A549 (cell line): ENCODE measurements at regions of chr3 and their contacts with region 1.

Region 1: GRCh38 chr3:47824541-47825473 is 21.9 kb downstream of the DHX30 start:
- DNase-seq: peak; percentile 81 to 89
- ATAC-seq: peak; percentile 100
- H3K4me3 ChIP-seq: peak overlapping the region; percentile 78
- H3K27ac ChIP-seq: peak overlapping the region; percentile 87 to 92
- H3K4me1 ChIP-seq: peaks cover 12% of the 10 kb centered on the region; the same call in 2 of the 3 replicates
- CTCF ChIP-seq: peak; percentile 75
- EP300 ChIP-seq: no peak
- POLR2A ChIP-seq: peak; percentile 54
- RAD21 ChIP-seq: no peak; a peak in 1 of 5 replicates

Region 2: DNA sequence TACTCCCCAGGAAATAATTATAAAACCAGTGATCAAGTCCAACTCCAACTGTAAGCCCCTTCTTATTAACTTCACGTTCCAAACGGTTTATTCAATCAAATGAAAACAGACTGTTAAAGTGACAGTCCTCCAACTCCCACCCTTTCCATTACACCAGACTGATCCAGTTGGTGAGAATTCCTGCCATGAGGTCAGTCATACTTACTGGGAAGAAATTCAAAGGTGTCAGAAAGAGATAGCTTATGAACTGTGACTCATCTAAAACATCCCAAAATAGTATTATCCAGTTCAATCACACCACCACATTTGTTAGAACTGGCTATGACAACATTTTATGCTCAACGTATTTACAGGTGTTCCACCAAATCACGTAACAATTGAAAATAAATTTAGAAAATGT is 62.6 kb before region 1 on chr3:
- CTCF ChIA-PET with region 1: no interaction called
- POLR2A ChIA-PET with region 1: no interaction called
- DNase-seq: no peak
- ATAC-seq: no peak
- H3K4me3 ChIP-seq: no peak overlapping the region
- H3K27ac ChIP-seq: no peak overlapping the region
- H3K4me1 ChIP-seq: no peaks in the 10 kb centered on the region
- CTCF ChIP-seq: no peak
- EP300 ChIP-seq: no peak
- POLR2A ChIP-seq: no peak
- RAD21 ChIP-seq: no peak

Region 3: GRCh38 chr3:47813551-47814177 is 11.1 kb before region 1 on chr3:
- CTCF ChIA-PET with region 1: interaction called, 33 read pairs
- POLR2A ChIA-PET with region 1: interaction called, 6 read pairs
- DNase-seq: no peak
- ATAC-seq: no peak
- H3K4me3 ChIP-seq: no peak overlapping the region
- H3K27ac ChIP-seq: no peak overlapping the region
- H3K4me1 ChIP-seq: no peaks in the 10 kb centered on the region
- CTCF ChIP-seq: no peak
- EP300 ChIP-seq: no peak
- POLR2A ChIP-seq: no peak
- RAD21 ChIP-seq: no peak

Region 4: GRCh38 chr3:47836986-47837385 is 12.2 kb after region 1 on chr3:
- CTCF ChIA-PET with region 1: interaction called, 48 read pairs
- POLR2A ChIA-PET with region 1: interaction called, 6 read pairs
- DNase-seq: no peak
- ATAC-seq: peak in 1 of 2 experiments; percentile 26; a peak in 3 of 6 replicates
- H3K4me3 ChIP-seq: no peak overlapping the region
- H3K27ac ChIP-seq: no peak overlapping the region
- H3K4me1 ChIP-seq: no peaks in the 10 kb centered on the region
- CTCF ChIP-seq: no peak
- EP300 ChIP-seq: no peak
- POLR2A ChIP-seq: no peak
- RAD21 ChIP-seq: no peak

Region 5: GRCh38 chr3:47932421-47932820 is 107.6 kb after region 1 on chr3:
- CTCF ChIA-PET with region 1: no interaction called
- POLR2A ChIA-PET with region 1: no interaction called
- DNase-seq: no peak
- ATAC-seq: no peak
- H3K4me3 ChIP-seq: no peak overlapping the region
- H3K27ac ChIP-seq: no peak overlapping the region
- H3K4me1 ChIP-seq: no peaks in the 10 kb centered on the region
- CTCF ChIP-seq: no peak
- EP300 ChIP-seq: no peak
- POLR2A ChIP-seq: no peak
- RAD21 ChIP-seq: no peak

Region 6: GRCh38 chr3:48180021-48180420 is 355.2 kb after region 1 on chr3:
- CTCF ChIA-PET with region 1: no interaction called
- POLR2A ChIA-PET with region 1: interaction called, 10 read pairs
- DNase-seq: no peak
- ATAC-seq: no peak
- H3K4me3 ChIP-seq: no peak overlapping the region
- H3K27ac ChIP-seq: no peak overlapping the region
- H3K4me1 ChIP-seq: no peaks in the 10 kb centered on the region
- CTCF ChIP-seq: no peak
- EP300 ChIP-seq: no peak
- POLR2A ChIP-seq: no peak
- RAD21 ChIP-seq: no peak

Region 7: GRCh38 chr3:48334605-48335004 is 509.8 kb after region 1 on chr3:
- CTCF ChIA-PET with region 1: no interaction called
- POLR2A ChIA-PET with region 1: no interaction called
- DNase-seq: no peak
- ATAC-seq: no peak
- H3K4me3 ChIP-seq: no peak overlapping the region
- H3K27ac ChIP-seq: no peak overlapping the region
- H3K4me1 ChIP-seq: no peaks in the 10 kb centered on the region
- CTCF ChIP-seq: no peak
- EP300 ChIP-seq: no peak
- POLR2A ChIP-seq: no peak
- RAD21 ChIP-seq: no peak